ENCODE measurements at regions of chr4 and their contacts with region 1.

Region 1: DNA sequence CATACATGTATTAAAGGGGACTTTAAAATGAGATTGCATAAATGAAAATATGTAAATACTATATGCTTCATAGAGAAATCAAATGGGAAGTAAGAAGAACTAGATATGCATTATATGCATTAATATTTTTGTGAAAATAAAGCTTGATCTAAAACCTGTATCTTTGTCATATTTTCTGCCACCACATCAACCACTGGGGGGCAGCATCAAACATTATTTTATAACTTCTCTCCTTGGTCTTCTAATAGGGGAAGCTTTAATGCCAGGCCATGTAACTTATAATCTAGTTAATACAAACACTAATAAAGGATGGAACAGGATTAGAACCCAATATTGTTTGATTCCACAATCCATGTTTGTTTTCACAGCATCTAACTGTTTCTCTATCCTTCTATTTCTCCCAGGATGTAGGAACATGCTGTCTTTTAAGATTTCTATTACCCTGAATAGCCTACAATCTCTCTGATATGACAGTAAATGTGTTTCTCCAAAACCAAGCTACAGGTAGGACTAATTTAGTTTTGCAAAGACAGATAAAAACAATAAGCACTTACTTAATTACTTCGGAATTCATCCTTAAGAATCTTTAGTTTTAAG is 10.0 kb downstream of the QRFPR start:
- DNase-seq: no peak
- H3K4me3 ChIP-seq: no peak overlapping the region
- H3K27ac ChIP-seq: no peak overlapping the region
- H3K4me1 ChIP-seq: no peaks in the 10 kb centered on the region
- H3K27me3 ChIP-seq: no peaks in the 10 kb centered on the region
- CTCF ChIP-seq: peak in 2 of 3 experiments; percentile 45 to 54

Region 2: DNA sequence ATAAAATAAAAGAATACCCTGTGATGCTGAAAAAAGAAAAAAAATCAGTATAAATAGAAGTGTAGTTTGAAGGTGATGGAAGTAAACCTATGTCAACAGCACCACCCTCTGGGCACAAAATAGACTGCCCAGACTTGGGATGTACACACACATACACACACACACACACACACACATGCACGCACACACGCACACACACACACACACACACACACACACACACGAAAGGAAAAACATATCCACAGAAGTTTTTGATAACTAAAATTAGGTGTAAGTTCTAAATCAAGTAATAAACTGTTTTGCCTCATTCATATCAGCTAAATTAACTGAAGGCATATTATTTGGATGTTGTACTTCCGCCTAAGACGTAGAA is 285.4 kb after region 1 on chr4:
- intact Hi-C with region 1: loop called (anchors 2 kb)
- DNase-seq: peak in 1 of 2 donors; percentile 65
- H3K4me3 ChIP-seq: no peak overlapping the region
- H3K27ac ChIP-seq: peak overlapping the region in 1 of 2 donors; percentile 22
- H3K4me1 ChIP-seq: no peaks in the 10 kb centered on the region
- H3K27me3 ChIP-seq: no peaks in the 10 kb centered on the region
- CTCF ChIP-seq: peak in 1 of 3 experiments; percentile 36